GM13976 (cell line): ENCODE measurements at regions of chr19 and their contacts with region 1.

Region 1: DNA sequence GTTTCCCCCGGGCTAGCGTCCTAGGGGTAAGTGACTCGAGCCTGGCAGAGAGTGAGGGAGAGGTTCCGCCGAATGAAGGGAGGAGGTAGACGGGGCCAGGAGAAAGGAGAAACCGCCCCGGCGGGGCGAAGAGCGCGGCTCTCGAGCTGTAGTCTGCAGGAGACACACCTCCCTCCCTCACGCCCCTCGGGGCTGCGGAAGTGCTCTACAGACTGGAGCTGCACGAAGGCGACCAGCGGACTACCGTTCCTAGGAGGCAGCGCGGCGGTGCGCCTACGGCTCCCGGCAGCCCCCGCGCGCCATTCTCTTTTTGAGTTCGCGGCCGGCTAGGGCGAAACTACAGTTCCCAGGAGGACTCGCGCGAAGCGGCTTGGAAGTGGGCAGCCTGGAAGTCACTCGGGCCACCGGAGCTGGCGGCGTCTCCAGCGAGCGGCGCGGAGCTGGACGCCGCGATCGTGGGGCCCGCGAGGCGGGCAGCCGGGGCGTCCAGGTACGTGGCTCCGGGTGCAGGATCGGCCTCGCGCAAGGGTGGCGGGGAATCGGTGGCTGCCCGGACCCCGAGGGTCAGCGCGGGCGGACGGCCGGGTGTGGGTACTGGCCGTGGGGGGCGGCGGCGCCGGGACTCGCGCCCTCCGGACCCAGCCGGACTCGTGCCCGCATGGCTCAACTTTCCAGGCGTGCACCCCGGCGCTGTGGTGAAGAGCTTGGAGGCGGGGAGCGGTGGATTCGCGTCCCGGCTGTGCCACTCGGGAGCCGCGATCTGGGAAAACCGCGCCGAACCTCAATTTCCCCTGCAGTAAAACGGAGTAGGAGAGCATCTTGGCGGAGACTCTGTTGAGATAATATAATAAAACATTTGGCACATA is at the start of gene SIPA1L3:
- DNase-seq: peak; percentile 94
- CTCF ChIP-seq: no peak

Region 2: GRCh38 chr19:38229585-38230073 is 322.5 kb after region 1 on chr19:
- in situ Hi-C with region 1: loop called (anchors 10 kb)
- DNase-seq: peak; percentile 93
- CTCF ChIP-seq: peak; percentile 21

Region 3: DNA sequence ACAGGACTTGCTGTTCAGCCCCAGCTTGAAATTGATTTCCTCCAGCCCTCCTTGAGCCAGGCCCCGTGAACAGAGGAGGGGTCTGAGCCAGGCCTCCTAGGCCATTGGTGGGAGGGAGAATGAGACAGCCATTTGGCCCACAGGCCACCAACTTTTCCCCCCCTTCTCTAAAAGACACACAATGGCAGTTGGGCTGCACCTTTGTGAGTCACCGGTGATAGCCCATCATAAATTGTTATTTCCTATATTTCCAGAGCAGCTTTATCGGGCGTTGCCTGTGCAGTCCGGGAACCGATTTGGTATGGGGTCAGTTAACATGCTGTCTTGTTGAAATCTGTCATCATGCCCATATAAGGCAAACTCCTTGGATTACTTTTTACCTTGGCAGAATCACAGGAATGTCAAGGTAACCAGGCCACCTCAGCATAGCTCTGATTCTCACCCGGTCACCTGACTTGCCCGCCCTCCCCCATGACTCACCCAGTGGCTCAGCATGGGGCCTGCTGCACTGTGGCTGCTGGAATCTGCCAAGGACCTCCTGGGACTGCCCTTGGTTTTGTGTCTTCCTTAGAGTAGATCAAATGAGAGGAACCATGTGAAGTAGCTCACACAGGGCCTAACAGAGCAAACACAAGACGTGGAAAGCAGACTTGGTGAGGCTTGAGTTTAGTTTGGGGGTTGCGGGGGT is 776.4 kb after region 1 on chr19:
- in situ Hi-C with region 1: no loop called
- DNase-seq: no peak
- CTCF ChIP-seq: no peak